ENCODE measurements at regions of chr4 and their contacts with region 1.

Region 1: DNA sequence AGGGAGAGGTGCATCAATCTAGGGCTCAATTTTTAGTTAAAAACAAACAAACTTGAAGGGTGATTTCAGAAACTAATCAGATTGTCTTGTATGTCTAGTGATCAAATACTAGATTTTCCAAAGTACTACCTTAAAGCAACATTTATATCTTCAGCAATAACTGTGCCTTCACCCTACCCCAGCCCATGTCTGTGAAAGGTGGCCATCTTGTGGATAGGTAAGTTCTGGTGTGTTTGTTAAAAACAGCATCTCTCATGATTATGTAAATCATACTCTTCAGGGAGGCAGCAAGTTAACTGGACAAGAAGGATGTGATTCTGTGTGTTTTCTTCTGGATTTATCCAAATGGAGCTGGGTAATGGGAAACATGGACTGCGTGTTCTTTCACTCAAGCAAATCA is 81.4 kb upstream of the ACSL1 start:
- DNase-seq: no peak
- ATAC-seq: peak; percentile 84
- H3K4me3 ChIP-seq: no peak overlapping the region
- H3K27ac ChIP-seq: no peak overlapping the region
- H3K4me1 ChIP-seq: no peaks in the 10 kb centered on the region
- H3K27me3 ChIP-seq: no peaks in the 10 kb centered on the region; a peak in 1 of 4 replicates
- CTCF ChIP-seq: peak; percentile 30 to 57 (median 34); a peak in 3 of 6 replicates
- EP300 ChIP-seq: no peak
- POLR2A ChIP-seq: no peak
- RAD21 ChIP-seq: peak; percentile 74

Region 2: DNA sequence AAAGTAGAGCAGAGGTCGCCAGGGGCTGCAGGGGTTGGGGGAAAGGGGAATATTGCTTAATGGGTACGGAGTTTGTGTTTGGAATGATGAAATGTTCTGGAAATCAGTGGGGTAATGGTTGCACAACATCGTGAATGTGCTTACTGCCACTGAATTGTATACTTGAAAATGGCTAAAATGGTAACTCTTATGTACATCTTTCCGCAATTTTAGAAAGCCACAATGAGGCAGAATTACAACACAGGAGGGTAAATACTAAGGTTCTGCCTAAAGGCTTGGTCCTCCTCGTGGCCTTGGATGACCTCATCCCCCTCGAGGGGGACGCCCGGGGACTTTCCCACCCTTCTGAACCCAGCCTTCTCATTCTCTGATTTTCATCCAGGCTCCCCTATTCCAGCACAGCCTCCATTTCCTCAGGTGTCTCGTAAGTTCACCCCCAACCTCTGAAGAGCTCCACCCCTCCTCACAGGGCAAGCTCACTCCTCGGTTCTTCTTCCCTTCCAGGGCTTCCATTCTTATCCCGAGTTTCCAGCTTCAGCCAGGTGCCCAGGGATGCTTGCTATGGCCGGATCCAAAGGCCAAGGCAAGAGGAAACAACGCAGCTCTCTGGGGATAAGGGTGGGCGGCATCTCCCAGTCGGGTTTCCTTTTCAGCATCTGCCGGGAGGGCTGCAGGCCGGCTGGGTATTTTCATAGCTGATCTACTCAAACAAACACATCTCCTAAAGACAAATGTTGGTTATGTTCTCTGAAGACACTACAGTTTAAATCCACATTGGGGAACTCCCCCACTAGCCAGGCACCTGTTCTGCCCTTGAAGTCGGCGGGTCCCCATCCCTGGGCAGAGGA is 10.1 kb before region 1 on chr4:
- CTCF ChIA-PET with region 1: interaction called, 6 read pairs
- POLR2A ChIA-PET with region 1: no interaction called
- RAD21 ChIA-PET with region 1: interaction called, 8 read pairs
- SMC1A ChIA-PET with region 1: interaction called, 12 read pairs
- in situ Hi-C with region 1: no loop called
- intact Hi-C with region 1: no loop called
- DNase-seq: no peak
- ATAC-seq: peak; percentile 88
- H3K4me3 ChIP-seq: peak overlapping the region; percentile 47; the same call in 1 of the 2 replicates
- H3K27ac ChIP-seq: no peak overlapping the region; the same call in 1 of the 2 replicates
- H3K4me1 ChIP-seq: peaks cover 13% of the 10 kb centered on the region
- H3K27me3 ChIP-seq: no peaks in the 10 kb centered on the region
- CTCF ChIP-seq: no peak
- EP300 ChIP-seq: no peak
- POLR2A ChIP-seq: no peak
- RAD21 ChIP-seq: no peak

Region 3: DNA sequence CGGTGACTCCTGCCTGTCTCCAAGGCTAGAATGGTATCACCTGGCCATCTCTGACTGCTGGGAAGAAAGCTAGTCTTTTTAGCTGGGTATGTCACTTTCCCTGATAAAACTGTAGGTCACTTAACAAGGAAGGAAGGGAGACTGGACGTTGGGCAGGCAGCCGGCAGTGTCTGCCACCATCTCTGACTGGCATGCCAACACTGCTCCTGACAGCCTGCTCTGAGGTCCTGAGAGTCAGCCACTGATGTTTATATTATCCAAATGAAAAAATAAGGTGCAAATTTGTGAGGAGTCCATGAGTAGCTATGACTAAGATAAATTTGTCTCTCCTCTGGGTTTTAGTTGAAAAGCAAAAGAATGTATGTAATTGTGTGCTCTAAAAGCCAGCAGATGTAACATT is 379.4 kb after region 1 on chr4:
- CTCF ChIA-PET with region 1: no interaction called
- POLR2A ChIA-PET with region 1: no interaction called
- RAD21 ChIA-PET with region 1: no interaction called
- SMC1A ChIA-PET with region 1: no interaction called
- in situ Hi-C with region 1: no loop called
- intact Hi-C with region 1: no loop called
- DNase-seq: no peak
- ATAC-seq: no peak
- H3K4me3 ChIP-seq: no peak overlapping the region
- H3K27ac ChIP-seq: no peak overlapping the region
- H3K4me1 ChIP-seq: no peaks in the 10 kb centered on the region
- H3K27me3 ChIP-seq: no peaks in the 10 kb centered on the region
- CTCF ChIP-seq: no peak
- EP300 ChIP-seq: no peak
- POLR2A ChIP-seq: no peak
- RAD21 ChIP-seq: no peak